Common myeloid progenitor, CD34-positive (primary cell): ENCODE measurements at regions of chr2 and their contacts with region 1.

Region 1: GRCh38 chr2:51795248-51795888 is 763.4 kb upstream of the NRXN1 start:
- DNase-seq: peak; percentile 2 to 16 (median 3)
- H3K4me3 ChIP-seq: no peak overlapping the region
- H3K27ac ChIP-seq: no peak overlapping the region
- H3K4me1 ChIP-seq: no peaks in the 10 kb centered on the region
- H3K27me3 ChIP-seq: no peaks in the 10 kb centered on the region

Region 2: DNA sequence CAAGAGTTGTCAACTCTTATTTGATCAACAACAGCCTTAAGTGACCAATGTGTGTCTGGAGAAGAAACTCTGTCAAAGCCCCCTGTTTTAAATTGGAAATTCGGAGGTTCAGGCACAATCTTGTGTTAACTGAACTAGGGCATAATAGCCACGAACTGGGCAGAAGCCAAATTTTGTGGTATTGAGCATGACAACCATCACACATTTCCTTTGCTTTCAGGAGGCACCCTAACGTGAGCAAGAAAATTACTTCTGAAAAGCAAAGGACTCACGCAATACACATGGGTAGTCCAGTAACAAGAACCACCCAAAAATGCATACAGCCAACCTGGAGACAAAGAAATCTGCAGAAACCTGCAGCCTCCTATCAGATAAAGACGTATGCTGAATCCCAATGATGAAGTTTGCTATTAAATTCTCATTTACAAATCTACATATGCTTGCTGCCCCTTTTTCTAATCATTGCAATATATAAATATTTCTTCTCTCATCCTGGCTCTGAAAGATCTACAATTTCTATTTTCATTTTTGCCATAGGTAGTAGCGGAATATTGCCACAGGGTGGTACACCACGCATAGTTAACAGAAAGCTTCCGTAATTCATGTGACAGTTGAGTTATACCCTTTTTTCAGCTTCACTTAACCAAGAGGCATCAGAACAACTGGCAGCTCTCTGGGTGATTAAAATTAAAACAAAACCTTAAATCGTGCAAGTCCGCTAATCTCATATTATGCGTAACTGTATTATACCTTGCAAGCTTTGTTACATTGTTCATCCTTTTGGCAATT is 1259.2 kb before region 1 on chr2:
- CTCF ChIA-PET with region 1: interaction called, 16 read pairs
- POLR2A ChIA-PET with region 1: no interaction called
- DNase-seq: peak; percentile 22 to 67 (median 59)
- H3K4me3 ChIP-seq: peak overlapping the region in 1 of 7 experiments; percentile 38
- H3K27ac ChIP-seq: no peak overlapping the region
- H3K4me1 ChIP-seq: no peaks in the 10 kb centered on the region
- H3K27me3 ChIP-seq: no peaks in the 10 kb centered on the region

Region 3: DNA sequence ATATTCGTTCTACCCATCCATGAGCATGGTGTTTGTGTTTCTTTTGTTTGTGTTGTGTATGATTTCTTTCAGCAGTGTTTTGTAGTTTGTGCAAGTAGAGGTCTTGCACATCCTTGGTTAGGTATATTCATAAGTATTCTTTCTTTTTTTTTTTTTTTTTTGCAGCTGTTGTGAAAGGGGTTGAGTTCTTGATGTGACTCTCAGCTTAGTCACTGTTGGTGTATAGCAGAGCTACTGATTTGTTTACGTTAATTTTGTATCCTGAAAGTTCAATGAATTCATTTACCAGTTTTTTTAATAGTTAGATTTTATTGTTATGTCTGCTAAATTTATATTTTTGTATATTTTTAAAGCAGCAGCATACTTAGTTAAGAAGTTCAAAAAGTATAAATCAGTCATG is 71.0 kb after region 1 on chr2:
- CTCF ChIA-PET with region 1: no interaction called
- POLR2A ChIA-PET with region 1: no interaction called
- DNase-seq: no peak
- H3K4me3 ChIP-seq: no peak overlapping the region
- H3K27ac ChIP-seq: no peak overlapping the region
- H3K4me1 ChIP-seq: no peaks in the 10 kb centered on the region
- H3K27me3 ChIP-seq: no peaks in the 10 kb centered on the region